Motor neuron (in vitro differentiated cells): ENCODE measurements at regions of chr4 and their contacts with region 1.

Region 1: DNA sequence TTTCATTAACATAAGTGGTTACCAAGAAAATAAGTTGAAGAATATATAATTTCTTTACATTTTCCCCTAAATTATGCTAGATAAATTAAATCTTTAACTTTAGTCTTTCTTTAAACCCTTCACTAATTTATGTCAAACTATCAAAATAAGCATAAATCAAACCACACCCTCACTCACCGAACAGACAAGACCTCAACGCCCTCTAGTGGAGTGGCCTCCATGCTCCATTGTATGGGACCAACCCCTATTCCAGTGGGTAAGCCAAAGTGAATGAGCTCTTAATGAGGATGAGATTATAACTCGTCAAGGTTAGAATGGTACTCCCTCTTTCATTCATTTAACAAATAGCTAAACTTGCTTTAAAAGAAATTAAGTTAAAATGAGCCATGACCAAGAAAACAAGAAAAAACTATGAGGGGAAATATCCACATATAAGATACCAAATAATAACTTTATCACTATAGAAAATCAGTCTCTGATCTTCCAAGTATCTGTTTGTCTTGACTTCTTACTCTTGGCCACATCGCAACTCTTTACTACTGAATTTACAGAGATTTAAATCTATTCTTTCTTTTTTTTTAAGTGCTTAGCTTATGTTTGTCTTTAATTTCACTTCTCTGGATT is 15.6 kb upstream of the BBS12 start:
- ATAC-seq: peak in 3 of 8 experiments; percentile 88 to 92 (median 90)
- H3K4me3 ChIP-seq: no peak overlapping the region
- H3K27ac ChIP-seq: no peak overlapping the region
- H3K4me1 ChIP-seq: no peaks in the 10 kb centered on the region

Region 2: GRCh38 chr4:122010610-122011009 is 706.3 kb before region 1 on chr4:
- in situ Hi-C with region 1: no loop called
- ATAC-seq: peak in 5 of 8 experiments; percentile 52 to 95 (median 80)
- H3K4me3 ChIP-seq: no peak overlapping the region
- H3K27ac ChIP-seq: no peak overlapping the region
- H3K4me1 ChIP-seq: peaks cover 0 to 2% of the 10 kb centered on the region in 2 donors

Region 3: GRCh38 chr4:122602277-122603142 is 114.4 kb before region 1 on chr4:
- in situ Hi-C with region 1: loop called in 1 of 9 experiments (anchors 10 kb)
- ATAC-seq: peak in 4 of 8 experiments; percentile 53 to 98 (median 92)
- H3K4me3 ChIP-seq: no peak overlapping the region
- H3K27ac ChIP-seq: no peak overlapping the region
- H3K4me1 ChIP-seq: no peaks in the 10 kb centered on the region

Region 4: DNA sequence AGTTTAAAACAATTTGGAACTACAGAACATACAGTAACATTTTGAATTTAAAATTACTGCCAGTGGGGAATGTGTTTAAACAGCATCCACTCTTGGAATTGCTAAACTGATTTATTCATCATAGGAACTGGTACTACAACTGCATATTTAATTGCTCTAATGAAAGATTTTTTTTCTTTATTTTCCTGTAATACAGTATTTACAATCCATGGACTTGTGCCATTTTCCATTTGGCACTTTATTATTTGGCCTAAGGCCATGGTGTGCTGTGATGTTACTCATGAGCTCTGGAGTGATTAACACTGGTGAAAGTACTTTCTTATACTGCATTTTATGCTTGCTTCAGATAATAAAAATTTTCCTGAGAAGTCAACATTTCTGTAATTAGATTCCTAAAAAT is 275.1 kb after region 1 on chr4:
- in situ Hi-C with region 1: no loop called
- ATAC-seq: peak in 3 of 8 experiments; percentile 33 to 67 (median 51)
- H3K4me3 ChIP-seq: no peak overlapping the region
- H3K27ac ChIP-seq: no peak overlapping the region
- H3K4me1 ChIP-seq: no peaks in the 10 kb centered on the region